ENCODE measurements at regions of chr7 and their contacts with region 1.

Region 1: GRCh38 chr7:91880413-91881241 is at the start of gene MTERF1:
- DNase-seq: peak; percentile 76 to 94
- H3K4me3 ChIP-seq: peak within 1 kb of the TSS; percentile 95
- H3K27ac ChIP-seq: 0 out of 2 replicates have a peak within 1 kb of the TSS, but pooled peaks have one; percentile 35
- H3K4me1 ChIP-seq: peaks cover 12% of the 10 kb centered on the region; the same call in 1 of the 2 replicates
- H3K27me3 ChIP-seq: no peaks in the 10 kb centered on the region
- CTCF ChIP-seq: peak; percentile 94
- total RNA-seq, gene MTERF1: 16.9 and 17.5 TPM in 2 replicates

Region 2: GRCh38 chr7:90945104-90945787 is 935.4 kb before region 1 on chr7:
- CTCF ChIA-PET with region 1: no interaction called
- POLR2A ChIA-PET with region 1: no interaction called
- intact Hi-C with region 1: no loop called
- DNase-seq: no peak
- H3K4me3 ChIP-seq: no peak overlapping the region
- H3K27ac ChIP-seq: no peak overlapping the region
- H3K4me1 ChIP-seq: no peaks in the 10 kb centered on the region
- H3K27me3 ChIP-seq: no peaks in the 10 kb centered on the region
- CTCF ChIP-seq: no peak

Region 3: DNA sequence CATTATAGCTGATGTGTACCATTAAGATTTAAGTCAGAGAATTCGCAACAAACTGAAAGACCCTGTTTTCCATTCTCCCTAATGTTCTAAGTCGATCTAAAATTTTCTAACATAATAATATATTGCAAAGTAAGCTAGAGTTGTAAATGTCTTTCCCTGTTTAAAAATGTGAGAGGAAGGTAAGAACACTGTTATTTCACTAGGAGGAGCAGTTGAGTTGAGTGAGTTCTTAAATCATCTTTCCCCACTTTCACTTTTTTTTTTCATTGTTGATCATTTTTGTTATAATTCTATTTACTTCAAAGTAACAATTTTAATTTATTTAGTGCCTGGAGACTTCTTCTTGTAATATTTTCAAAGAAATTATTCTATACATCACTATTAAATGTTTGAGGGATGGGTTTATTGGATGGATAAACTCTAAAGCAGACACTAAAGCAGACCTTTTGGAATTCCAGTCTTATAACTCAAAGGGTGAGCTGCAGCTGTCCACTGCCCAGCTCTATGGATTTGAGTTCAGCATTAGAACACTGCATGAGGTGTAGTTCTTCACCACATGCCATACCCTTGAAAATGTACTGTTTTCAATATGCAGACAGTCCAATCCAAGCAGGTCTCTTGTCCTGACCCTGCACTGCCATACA is 797.7 kb before region 1 on chr7:
- CTCF ChIA-PET with region 1: no interaction called
- POLR2A ChIA-PET with region 1: no interaction called
- intact Hi-C with region 1: loop called (anchors 2 kb)
- DNase-seq: no peak
- H3K4me3 ChIP-seq: no peak overlapping the region
- H3K27ac ChIP-seq: no peak overlapping the region
- H3K4me1 ChIP-seq: no peaks in the 10 kb centered on the region
- H3K27me3 ChIP-seq: no peaks in the 10 kb centered on the region
- CTCF ChIP-seq: peak; percentile 62

Region 4: DNA sequence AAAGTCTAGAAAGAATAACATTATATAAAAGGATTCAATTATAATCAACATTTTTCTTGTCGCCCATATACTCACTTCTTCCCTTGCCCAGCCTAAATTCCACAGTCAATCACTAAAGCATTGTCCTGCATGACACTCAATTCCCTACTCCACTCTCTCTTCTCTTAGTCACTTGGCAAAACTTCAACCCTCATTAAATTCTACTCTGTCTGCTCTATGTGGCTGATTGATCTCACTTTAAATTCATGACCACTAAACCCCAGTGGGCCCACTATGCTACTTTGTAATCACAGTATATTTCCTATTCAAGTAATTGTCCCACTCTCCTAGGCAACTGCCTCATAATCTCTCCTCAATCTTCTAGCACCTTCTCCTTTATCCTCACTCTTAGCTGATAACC is 54.2 kb before region 1 on chr7:
- CTCF ChIA-PET with region 1: interaction called, 16 read pairs
- POLR2A ChIA-PET with region 1: interaction called, 4 read pairs
- intact Hi-C with region 1: loop called (anchors 1 kb)
- DNase-seq: no peak
- H3K4me3 ChIP-seq: no peak overlapping the region
- H3K27ac ChIP-seq: no peak overlapping the region
- H3K4me1 ChIP-seq: no peaks in the 10 kb centered on the region
- H3K27me3 ChIP-seq: no peaks in the 10 kb centered on the region
- CTCF ChIP-seq: no peak

Region 5: GRCh38 chr7:91940572-91941341 is 60.1 kb after region 1 on chr7 and contains the start of gene AKAP9:
- CTCF ChIA-PET with region 1: interaction called, 3 read pairs
- POLR2A ChIA-PET with region 1: no interaction called
- intact Hi-C with region 1: loop called (anchors 1 kb)
- DNase-seq: peak; percentile 81 to 94
- H3K4me3 ChIP-seq: peak within 1 kb of the TSS; percentile 70
- H3K27ac ChIP-seq: peak within 1 kb of the TSS; percentile 78
- H3K4me1 ChIP-seq: peaks cover 30% of the 10 kb centered on the region
- H3K27me3 ChIP-seq: no peaks in the 10 kb centered on the region
- CTCF ChIP-seq: no peak
- total RNA-seq, gene AKAP9: 48.0 and 71.3 TPM in 2 replicates

Region 6: GRCh38 chr7:92178927-92179924 is 298.6 kb after region 1 on chr7 and contains the start of gene LRRD1:
- CTCF ChIA-PET with region 1: no interaction called
- POLR2A ChIA-PET with region 1: no interaction called
- intact Hi-C with region 1: loop called (anchors 1 kb)
- DNase-seq: peak; percentile 60 to 96
- H3K4me3 ChIP-seq: 0 out of 2 replicates have a peak within 1 kb of the TSS, but pooled peaks have one; percentile 24
- H3K27ac ChIP-seq: no peak within 1 kb of the TSS
- H3K4me1 ChIP-seq: 0 out of 2 replicates have a peak, but pooled peaks cover 9% of the 10 kb centered on the region
- H3K27me3 ChIP-seq: no peaks in the 10 kb centered on the region
- CTCF ChIP-seq: peak; percentile 72
- total RNA-seq, gene LRRD1: not detected in 2 replicates

Region 7: GRCh38 chr7:92461027-92462003 is 580.7 kb after region 1 on chr7:
- CTCF ChIA-PET with region 1: no interaction called
- POLR2A ChIA-PET with region 1: no interaction called
- intact Hi-C with region 1: loop called (anchors 2 kb)
- DNase-seq: peak in 1 of 2 experiments; percentile 29
- H3K4me3 ChIP-seq: no peak overlapping the region
- H3K27ac ChIP-seq: no peak overlapping the region
- H3K4me1 ChIP-seq: peaks cover 34% of the 10 kb centered on the region
- H3K27me3 ChIP-seq: no peaks in the 10 kb centered on the region
- CTCF ChIP-seq: peak; percentile 81

Region 8: GRCh38 chr7:92720604-92721350 is 840.1 kb after region 1 on chr7:
- CTCF ChIA-PET with region 1: no interaction called
- POLR2A ChIA-PET with region 1: no interaction called
- intact Hi-C with region 1: no loop called
- DNase-seq: no peak
- H3K4me3 ChIP-seq: no peak overlapping the region
- H3K27ac ChIP-seq: no peak overlapping the region
- H3K4me1 ChIP-seq: no peaks in the 10 kb centered on the region
- H3K27me3 ChIP-seq: no peaks in the 10 kb centered on the region
- CTCF ChIP-seq: no peak